Activated naive CD4-positive, alpha-beta T cell treated with anti-CD3 and anti-CD28 coated beads for 36 hours (primary cell): ENCODE measurements at regions of chr6 and their contacts with region 1.

Region 1: DNA sequence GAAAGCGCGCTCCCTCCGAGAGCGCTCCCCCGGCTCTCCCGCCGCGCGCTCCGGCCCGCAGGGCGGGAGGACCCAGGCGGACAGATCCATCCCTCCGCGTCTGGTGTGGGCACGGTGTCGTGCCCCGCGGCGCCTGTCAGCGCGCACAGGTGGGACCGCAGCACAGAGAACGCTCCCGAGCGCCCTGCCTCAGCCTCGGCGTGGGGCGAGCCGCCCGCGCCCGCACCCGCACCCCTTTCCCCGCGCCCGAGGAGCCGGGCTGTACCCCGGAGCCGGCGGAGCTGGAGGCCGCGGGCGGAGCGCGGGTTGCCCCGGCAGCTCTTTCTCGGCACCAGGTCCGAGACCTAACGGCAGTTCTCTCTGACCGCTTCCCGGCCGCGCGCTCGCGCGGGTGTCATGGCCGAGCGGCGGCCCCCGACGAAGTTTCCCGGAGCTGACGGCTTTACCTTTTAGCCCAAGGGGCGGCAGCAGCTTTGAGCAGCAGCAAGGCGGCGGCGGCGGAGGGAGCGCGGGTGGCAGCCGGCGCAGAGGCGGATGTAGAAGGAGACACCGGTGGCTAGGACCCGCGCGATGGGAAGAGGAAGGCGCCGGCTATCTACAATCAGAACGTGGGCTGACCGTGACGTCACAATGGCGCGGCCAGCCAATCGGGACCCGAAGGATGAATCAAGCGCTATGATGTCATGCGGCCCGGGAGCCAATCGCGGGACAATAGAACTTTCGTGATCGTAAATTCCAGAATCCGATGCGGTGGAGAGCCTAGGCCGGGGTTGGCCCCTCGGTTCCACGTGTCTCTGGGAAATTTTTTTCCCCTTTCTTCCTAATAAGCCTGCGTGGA is at the start of gene ELOVL5:
- DNase-seq: peak; percentile 99
- H3K4me3 Mint-ChIP-seq: peak within 1 kb of the TSS; percentile 80
- H3K27ac Mint-ChIP-seq: peak within 1 kb of the TSS; percentile 89
- H3K4me1 Mint-ChIP-seq: peaks cover 47% of the 10 kb centered on the region
- H3K27me3 Mint-ChIP-seq: no peaks in the 10 kb centered on the region
- total RNA-seq, gene ELOVL5: 132 to 136 TPM

Region 2: GRCh38 chr6:52984247-52984646 is 364.3 kb before region 1 on chr6:
- CTCF ChIA-PET with region 1: no interaction called
- intact Hi-C with region 1: loop called (anchors 5 kb)
- DNase-seq: peak; percentile 81
- H3K4me3 Mint-ChIP-seq: no peak overlapping the region
- H3K27ac Mint-ChIP-seq: peak overlapping the region; percentile 82
- H3K4me1 Mint-ChIP-seq: peaks cover 63% of the 10 kb centered on the region
- H3K27me3 Mint-ChIP-seq: peaks cover 8% of the 10 kb centered on the region

Region 3: GRCh38 chr6:53233309-53233708 is 115.3 kb before region 1 on chr6:
- CTCF ChIA-PET with region 1: no interaction called
- intact Hi-C with region 1: loop called (anchors 1 kb)
- DNase-seq: no peak
- H3K4me3 Mint-ChIP-seq: no peak overlapping the region
- H3K27ac Mint-ChIP-seq: no peak overlapping the region
- H3K4me1 Mint-ChIP-seq: peaks cover 24% of the 10 kb centered on the region
- H3K27me3 Mint-ChIP-seq: no peaks in the 10 kb centered on the region

Region 4: DNA sequence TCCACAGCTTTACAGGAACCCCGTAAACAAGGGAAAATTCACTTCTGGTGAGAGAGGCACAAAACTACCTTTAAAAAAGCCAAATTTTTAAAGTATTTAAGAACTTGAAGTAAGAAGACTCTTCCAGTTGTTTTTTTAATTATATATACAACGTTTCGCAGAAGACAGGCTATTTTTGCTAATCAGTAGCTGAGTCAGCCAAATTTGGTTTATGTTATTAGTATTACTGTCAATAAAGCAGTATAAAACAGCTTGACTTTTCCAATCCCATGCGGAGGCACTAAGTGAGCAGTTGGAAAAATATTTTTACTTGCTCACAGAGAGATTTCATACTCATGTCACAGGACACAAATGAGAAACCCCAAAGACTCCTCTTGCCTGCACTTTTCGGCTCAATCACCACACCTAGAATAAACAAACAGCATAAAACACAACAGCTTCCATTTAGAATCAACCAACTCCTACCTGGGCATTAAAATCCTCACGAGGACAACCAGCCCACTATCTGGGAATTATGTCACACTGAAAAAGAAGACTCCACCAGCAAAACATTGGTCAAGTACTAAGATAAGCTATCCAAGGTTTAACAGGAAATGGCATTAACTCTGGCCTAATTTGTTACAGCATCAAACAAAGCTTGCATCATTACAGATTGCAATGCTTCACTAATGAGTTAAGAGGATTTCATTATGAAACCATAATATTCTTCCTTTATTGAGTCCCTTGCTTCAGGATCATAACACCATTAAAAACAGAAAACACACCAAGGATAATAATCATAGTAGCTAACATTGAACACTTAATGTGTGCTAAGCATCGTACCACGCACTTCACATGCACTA is 26.2 kb before region 1 on chr6:
- CTCF ChIA-PET with region 1: interaction called, 4 read pairs
- intact Hi-C with region 1: loop called (anchors 1 kb)
- DNase-seq: no peak
- H3K4me3 Mint-ChIP-seq: no peak overlapping the region
- H3K27ac Mint-ChIP-seq: peak overlapping the region; percentile 24
- H3K4me1 Mint-ChIP-seq: peaks cover 56% of the 10 kb centered on the region
- H3K27me3 Mint-ChIP-seq: no peaks in the 10 kb centered on the region

Region 5: GRCh38 chr6:53359072-53359842 is 10.7 kb after region 1 on chr6:
- CTCF ChIA-PET with region 1: no interaction called
- intact Hi-C with region 1: loop called (anchors 1 kb)
- DNase-seq: peak; percentile 94
- H3K4me3 Mint-ChIP-seq: peak overlapping the region; percentile 90
- H3K27ac Mint-ChIP-seq: peak overlapping the region; percentile 96
- H3K4me1 Mint-ChIP-seq: peaks cover 39% of the 10 kb centered on the region
- H3K27me3 Mint-ChIP-seq: no peaks in the 10 kb centered on the region

Region 6: DNA sequence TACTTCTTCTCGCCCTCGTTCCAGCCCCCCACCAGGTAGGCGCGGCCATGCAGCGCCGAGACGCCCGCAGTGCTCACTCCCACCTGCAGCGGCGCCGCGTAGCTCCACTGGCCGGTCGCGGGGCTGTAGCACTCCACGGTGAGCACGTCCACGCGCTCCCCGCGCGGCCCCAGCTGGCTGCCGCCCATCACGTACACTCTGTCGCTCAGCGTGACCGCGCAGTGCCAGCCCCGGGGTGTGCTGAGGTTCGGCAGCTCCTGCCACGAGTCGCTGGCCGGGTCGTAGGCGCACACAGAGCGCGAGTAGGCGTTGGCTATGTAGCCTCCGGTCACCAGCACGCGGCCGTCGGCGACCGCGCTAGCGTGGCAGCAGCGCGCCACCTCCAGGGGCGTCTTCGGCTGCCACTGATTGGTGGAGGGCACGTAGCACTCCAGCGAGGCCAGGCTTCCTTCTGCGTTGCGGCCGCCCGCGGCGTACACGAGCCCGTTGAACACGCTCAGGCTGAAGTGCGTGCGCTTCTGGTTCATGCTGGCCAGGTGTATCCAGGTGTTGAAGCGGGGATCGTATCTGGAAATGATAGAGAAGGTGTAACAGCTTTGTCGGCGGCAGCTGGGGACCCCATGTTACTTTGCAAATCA is 303.3 kb after region 1 on chr6:
- CTCF ChIA-PET with region 1: no interaction called
- intact Hi-C with region 1: loop called (anchors 5 kb)
- DNase-seq: peak; percentile 81
- H3K4me3 Mint-ChIP-seq: peak overlapping the region; percentile 85
- H3K27ac Mint-ChIP-seq: peak overlapping the region; percentile 46
- H3K4me1 Mint-ChIP-seq: peaks cover 26% of the 10 kb centered on the region
- H3K27me3 Mint-ChIP-seq: no peaks in the 10 kb centered on the region